ENCODE measurements at regions of chr12 and their contacts with region 1.

Region 1: DNA sequence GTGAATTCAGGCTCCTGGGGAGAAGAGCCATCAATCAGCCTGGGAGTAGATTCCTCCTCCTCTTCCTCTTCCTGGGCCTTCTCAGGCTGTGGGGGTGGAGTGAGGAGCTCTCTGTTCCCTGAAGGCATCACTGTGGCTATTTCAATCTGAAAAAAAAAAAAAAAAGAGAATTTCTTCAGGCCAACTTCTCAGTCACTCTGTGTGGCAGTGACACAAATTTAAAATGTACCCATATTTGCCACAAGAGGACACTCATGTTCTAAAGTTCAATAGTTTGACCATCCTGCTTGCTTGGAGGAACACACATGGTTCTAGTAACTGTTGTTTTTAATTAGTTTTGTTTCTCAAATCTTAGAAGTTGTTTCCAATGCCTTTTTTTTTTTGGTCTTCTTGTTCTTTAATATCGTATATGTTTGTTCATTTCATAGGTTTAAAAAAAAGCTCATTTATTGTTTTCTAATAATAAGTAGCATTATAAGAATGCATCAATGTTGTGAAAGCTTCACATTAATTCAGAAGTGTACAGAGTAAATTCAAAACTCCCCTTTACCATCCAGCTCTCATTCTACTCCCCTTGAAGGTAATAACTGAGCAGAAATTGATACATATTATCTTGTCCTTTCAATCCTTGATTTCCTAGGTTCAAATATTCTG is 23.3 kb upstream of the CCER1 start:
- DNase-seq: no peak
- ATAC-seq: peak; percentile 86
- H3K4me3 Mint-ChIP-seq: no peak overlapping the region
- H3K27ac Mint-ChIP-seq: no peak overlapping the region
- H3K4me1 Mint-ChIP-seq: peaks cover 12% of the 10 kb centered on the region
- H3K27me3 Mint-ChIP-seq: peaks cover 43% of the 10 kb centered on the region
- CTCF ChIP-seq: peak; percentile 34; the same call in 1 of the 2 replicates

Region 2: DNA sequence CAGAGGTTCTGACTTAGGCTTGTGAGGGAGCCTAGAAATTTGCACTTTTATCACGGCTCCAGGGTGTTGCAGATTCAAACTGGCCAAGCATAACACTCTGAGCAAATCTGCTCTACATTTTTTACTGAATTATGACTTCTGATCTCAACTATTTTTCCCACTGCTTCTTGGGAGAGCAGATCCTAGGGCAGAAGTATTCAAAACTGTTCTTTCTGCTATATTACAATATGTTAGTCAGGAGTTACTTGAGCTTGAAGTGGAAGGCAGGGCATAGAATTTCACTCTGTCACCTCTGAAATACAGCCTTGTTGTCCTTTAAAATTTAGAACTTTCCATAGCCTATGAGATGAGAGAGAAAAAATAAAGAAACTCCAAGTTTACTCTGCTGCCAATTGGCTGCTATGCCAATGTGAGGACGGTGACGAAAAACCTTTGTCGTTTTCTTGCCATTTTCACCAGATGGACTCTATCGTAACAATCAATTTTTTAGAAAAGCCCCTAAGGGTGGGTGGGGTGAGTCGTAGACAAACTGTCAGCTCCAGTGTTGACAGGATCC is 96.0 kb after region 1 on chr12:
- CTCF ChIA-PET with region 1: no interaction called
- POLR2A ChIA-PET with region 1: no interaction called
- DNase-seq: no peak
- ATAC-seq: no peak
- H3K4me3 Mint-ChIP-seq: no peak overlapping the region
- H3K27ac Mint-ChIP-seq: no peak overlapping the region
- H3K4me1 Mint-ChIP-seq: peaks cover 12% of the 10 kb centered on the region
- H3K27me3 Mint-ChIP-seq: peaks cover 6% of the 10 kb centered on the region; the same call in 1 of the 2 replicates
- CTCF ChIP-seq: no peak

Region 3: DNA sequence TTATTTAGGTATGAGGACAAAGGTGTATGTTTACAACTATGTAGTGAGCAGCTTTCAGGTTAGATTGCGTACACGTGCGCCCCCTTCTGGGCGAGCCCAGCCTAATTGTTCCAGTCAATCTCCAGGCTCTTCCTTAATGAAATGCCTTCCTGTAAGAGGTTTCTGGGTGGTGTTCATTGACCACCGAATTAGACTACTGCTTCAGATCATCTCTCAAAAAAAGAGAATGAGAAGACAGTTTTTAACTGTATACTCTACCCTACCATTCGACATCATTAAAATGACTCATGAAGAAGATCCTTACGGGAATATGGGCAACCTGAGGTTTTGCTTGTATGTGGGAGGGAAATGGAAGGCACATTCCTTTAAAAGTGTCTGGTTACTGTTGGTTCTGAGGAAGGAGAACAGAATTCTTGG is 130.9 kb after region 1 on chr12:
- CTCF ChIA-PET with region 1: interaction called, 12 read pairs
- POLR2A ChIA-PET with region 1: no interaction called
- DNase-seq: peak; percentile 82
- ATAC-seq: peak; percentile 99
- H3K4me3 Mint-ChIP-seq: no peak overlapping the region
- H3K27ac Mint-ChIP-seq: no peak overlapping the region
- H3K4me1 Mint-ChIP-seq: peaks cover 6% of the 10 kb centered on the region
- H3K27me3 Mint-ChIP-seq: no peaks in the 10 kb centered on the region; the same call in 1 of the 2 replicates
- CTCF ChIP-seq: peak; percentile 62; the same call in 1 of the 2 replicates